ENCODE measurements at regions of chr3 and their contacts with region 1.

Region 1: GRCh38 chr3:14124615-14125190 is at the starts of genes CHCHD4 and TMEM43:
- DNase-seq: peak; percentile 99
- ATAC-seq: peak; percentile 90
- H3K4me3 Mint-ChIP-seq: peak within 1 kb of the TSS; percentile 99
- H3K27ac Mint-ChIP-seq: peak within 1 kb of the TSS; percentile 89
- H3K4me1 Mint-ChIP-seq: peaks cover 60% of the 10 kb centered on the region
- H3K27me3 Mint-ChIP-seq: no peaks in the 10 kb centered on the region
- total RNA-seq, gene CHCHD4: 15.2 to 19.7 TPM
- total RNA-seq, gene TMEM43: 27.6 to 31.8 TPM

Region 2: DNA sequence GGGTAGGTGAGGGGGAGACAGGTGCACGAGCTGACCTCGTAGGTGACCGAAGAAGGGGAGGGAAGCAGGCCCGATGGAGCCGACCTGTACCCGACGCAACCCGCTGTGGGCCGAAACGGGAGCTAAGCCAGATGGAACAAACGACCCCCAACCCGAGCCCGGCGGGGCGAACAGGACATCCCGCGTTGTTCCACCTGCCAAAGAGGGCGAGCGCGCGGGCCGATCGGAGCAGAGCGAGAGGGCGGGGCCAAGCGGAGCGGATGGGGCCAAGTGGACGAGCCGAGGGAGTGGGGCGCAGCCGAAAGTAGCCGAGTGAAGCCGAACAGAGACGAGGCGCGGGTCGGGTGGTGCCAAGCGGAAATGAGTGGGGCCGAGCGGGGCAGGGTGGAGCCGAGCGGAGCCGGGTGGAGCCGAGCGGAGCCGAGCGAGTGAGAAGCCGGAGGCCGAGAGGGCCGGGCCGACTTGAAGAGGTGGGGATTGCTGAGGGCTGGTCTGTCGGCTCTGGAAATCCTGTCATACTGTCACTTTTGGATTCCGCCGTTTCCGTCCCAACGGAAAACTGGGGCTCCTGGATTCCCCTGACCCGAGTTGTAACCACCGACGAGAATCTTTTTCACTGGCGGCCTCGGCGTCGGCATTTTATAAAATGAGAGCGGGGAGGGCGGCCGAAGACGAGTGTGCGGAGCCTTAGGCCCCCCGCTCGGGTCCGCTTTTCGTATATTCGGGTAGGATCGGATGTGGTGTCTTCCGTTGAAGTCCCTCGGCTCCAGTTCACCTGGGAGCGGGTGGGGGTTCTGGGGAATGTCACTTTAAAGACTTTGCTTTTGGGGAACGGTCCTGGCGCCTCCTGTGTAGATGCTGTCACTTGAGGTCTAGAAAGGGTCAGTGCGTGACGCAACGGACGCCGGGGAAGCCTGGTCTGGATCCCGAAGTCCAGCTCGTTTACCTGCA is 229.3 kb before region 1 on chr3:
- CTCF ChIA-PET with region 1: interaction called, 13 read pairs
- DNase-seq: peak; percentile 98
- ATAC-seq: peak; percentile 99
- H3K4me3 Mint-ChIP-seq: peak overlapping the region; percentile 79
- H3K27ac Mint-ChIP-seq: peak overlapping the region; percentile 81
- H3K4me1 Mint-ChIP-seq: peaks cover 24% of the 10 kb centered on the region
- H3K27me3 Mint-ChIP-seq: no peaks in the 10 kb centered on the region

Region 3: DNA sequence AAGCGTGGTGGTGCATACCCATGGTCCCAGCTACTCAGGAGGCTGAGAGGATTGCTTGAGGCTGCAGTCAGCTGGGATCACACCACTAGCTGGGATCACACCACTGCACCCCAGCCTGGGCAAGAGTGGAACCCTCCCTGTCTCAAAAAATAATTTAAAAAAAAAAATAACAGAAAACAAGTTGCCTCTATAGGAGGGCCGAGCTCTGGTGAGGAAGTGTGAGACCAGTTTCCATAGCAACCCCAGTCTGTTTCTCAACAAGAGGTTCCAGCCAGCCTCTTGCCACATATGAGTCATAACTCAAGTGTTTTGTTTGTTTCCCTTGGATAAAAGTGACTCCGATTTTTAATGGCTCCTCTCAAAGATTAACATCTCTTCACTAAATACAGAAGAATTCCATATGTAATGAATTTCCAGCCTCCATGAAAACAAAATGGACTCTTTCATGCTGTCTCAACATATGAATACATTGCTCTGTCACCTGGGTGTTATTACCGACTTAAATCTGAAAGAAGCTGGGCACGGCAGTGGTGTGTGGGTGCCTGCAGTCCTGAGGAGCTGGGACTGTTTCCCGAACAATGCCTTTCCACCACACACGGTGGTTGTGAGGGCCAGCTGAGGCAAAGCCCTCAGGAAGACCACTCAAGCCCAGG is 19.8 kb after region 1 on chr3:
- CTCF ChIA-PET with region 1: interaction called, 18 read pairs
- DNase-seq: peak; percentile 85
- ATAC-seq: peak; percentile 90
- H3K4me3 Mint-ChIP-seq: peak overlapping the region; percentile 47
- H3K27ac Mint-ChIP-seq: peak overlapping the region; percentile 91
- H3K4me1 Mint-ChIP-seq: peaks cover 31% of the 10 kb centered on the region
- H3K27me3 Mint-ChIP-seq: no peaks in the 10 kb centered on the region

Region 4: GRCh38 chr3:14178247-14179113 is 53.8 kb after region 1 on chr3 and contains the starts of genes LSM3 and XPC:
- CTCF ChIA-PET with region 1: interaction called, 19 read pairs
- DNase-seq: peak; percentile 97
- ATAC-seq: peak; percentile 92
- H3K4me3 Mint-ChIP-seq: peak within 1 kb of the TSS; percentile 81
- H3K27ac Mint-ChIP-seq: peak within 1 kb of the TSS; percentile 99
- H3K4me1 Mint-ChIP-seq: peaks cover 66% of the 10 kb centered on the region
- H3K27me3 Mint-ChIP-seq: no peaks in the 10 kb centered on the region
- total RNA-seq, gene LSM3: 16.5 to 18.9 TPM
- total RNA-seq, gene XPC: 36.0 to 39.5 TPM

Region 5: GRCh38 chr3:14312371-14312770 is 187.7 kb after region 1 on chr3:
- CTCF ChIA-PET with region 1: no interaction called
- DNase-seq: no peak
- ATAC-seq: no peak
- H3K4me3 Mint-ChIP-seq: no peak overlapping the region
- H3K27ac Mint-ChIP-seq: no peak overlapping the region
- H3K4me1 Mint-ChIP-seq: no peaks in the 10 kb centered on the region
- H3K27me3 Mint-ChIP-seq: peaks cover 43% of the 10 kb centered on the region